Sigmoid colon (tissue), 7 donors: ENCODE measurements at regions of chr4 and their contacts with region 1.

Region 1: DNA sequence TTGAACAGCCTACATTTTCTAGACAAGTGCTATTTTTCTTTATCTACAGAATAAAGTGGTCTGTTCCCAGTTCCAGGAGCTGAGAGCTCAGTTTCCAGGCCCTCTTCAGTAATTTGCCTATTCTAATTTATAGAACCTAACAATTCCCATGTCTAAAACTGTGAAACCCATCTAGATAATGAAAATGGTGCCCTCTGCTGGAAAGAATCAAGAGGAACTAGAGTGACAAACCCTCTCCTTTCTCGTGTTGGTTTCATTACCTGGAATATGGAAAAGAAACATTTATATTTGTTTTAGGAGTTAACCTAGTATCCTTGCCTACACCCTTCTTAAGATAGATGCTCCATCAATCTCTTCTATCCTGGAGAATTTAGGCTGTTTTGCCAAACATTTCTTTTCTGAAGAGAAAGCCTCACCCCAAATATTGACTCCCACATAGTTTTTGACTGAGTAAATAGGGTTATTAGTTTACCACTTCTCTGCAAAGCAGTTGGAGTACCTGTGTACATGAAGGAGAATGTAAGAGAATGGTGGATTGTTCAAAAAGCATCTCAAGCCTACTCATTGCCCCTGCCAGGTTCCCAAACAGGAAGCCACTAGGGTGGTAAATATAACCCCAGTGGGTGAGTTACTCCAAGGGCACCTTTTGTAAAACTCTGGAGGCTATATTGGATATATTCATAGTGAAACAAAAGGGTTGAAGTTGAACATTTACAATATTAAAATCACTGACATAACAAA is 121.6 kb downstream of the RASL11B start:
- DNase-seq: no peak
- H3K4me3 ChIP-seq: no peak overlapping the region
- H3K27ac ChIP-seq: no peak overlapping the region
- H3K4me1 ChIP-seq: peaks cover 0 to 24% (median 6%) of the 10 kb centered on the region in 4 donors
- H3K27me3 ChIP-seq: no peaks in the 10 kb centered on the region
- CTCF ChIP-seq: peak; percentile 10 to 69 (median 50)
- EP300 ChIP-seq: no peak
- POLR2A ChIP-seq: no peak

Region 2: GRCh38 chr4:52376132-52376704 is 607.5 kb before region 1 on chr4:
- intact Hi-C with region 1: loop called (anchors 5 kb)
- DNase-seq: no peak
- H3K4me3 ChIP-seq: no peak overlapping the region
- H3K27ac ChIP-seq: no peak overlapping the region
- H3K4me1 ChIP-seq: no peaks in the 10 kb centered on the region
- H3K27me3 ChIP-seq: no peaks in the 10 kb centered on the region
- CTCF ChIP-seq: peak in 3 of 4 experiments; percentile 22 to 60 (median 50)
- EP300 ChIP-seq: no peak
- POLR2A ChIP-seq: no peak

Region 3: DNA sequence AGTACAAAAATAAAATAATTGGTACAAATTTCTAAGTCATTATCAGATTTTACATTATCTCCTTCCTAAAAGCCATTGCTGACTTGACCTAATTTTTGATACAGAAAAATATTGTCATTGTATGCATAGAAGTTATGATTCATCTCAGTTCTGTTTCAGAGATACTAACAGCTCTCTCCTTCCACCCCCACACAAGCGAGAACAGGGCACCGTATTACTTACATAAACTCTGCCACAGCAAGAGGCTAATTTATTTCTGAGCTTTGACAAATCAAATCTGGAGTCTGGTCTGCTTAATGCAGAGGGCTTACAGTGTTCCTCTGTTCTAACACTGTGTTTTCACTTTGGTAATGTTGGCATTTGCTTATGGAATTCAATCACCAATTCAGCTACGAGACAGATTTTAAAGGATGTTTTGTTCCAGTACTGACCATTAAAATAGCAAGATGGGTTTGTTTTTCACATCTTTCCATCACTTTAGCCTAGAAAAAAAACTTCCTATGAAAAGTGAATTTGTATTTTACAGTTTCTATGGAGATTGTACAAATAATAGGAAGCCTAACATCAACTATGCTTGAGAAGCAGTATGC is 506.4 kb before region 1 on chr4:
- intact Hi-C with region 1: no loop called
- DNase-seq: no peak
- H3K4me3 ChIP-seq: no peak overlapping the region
- H3K27ac ChIP-seq: no peak overlapping the region
- H3K4me1 ChIP-seq: peaks cover 0 to 11% (median 0%) of the 10 kb centered on the region in 4 donors
- H3K27me3 ChIP-seq: no peaks in the 10 kb centered on the region
- CTCF ChIP-seq: no peak
- EP300 ChIP-seq: no peak
- POLR2A ChIP-seq: no peak

Region 4: GRCh38 chr4:52659001-52659721 is 324.6 kb before region 1 on chr4 and contains the start of gene USP46:
- intact Hi-C with region 1: loop called (anchors 5 kb)
- DNase-seq: peak; percentile 86
- H3K4me3 ChIP-seq: peak within 1 kb of the TSS; percentile 69 to 95 (median 84)
- H3K27ac ChIP-seq: peak within 1 kb of the TSS; percentile 95 to 98 (median 96)
- H3K4me1 ChIP-seq: peaks cover 0 to 28% (median 18%) of the 10 kb centered on the region in 4 donors
- H3K27me3 ChIP-seq: no peaks in the 10 kb centered on the region
- CTCF ChIP-seq: no peak
- EP300 ChIP-seq: no peak
- POLR2A ChIP-seq: no peak
- total RNA-seq, gene USP46: 5.0 to 9.1 (median 6.0) TPM

Region 5: GRCh38 chr4:52861879-52862616 is 121.7 kb before region 1 on chr4 and contains the start of gene RASL11B:
- intact Hi-C with region 1: loop called (anchors 5 kb)
- DNase-seq: peak; percentile 87
- H3K4me3 ChIP-seq: peak within 1 kb of the TSS; percentile 44 to 75 (median 65)
- H3K27ac ChIP-seq: peak within 1 kb of the TSS; percentile 45 to 69 (median 58)
- H3K4me1 ChIP-seq: peaks cover 0 to 27% (median 22%) of the 10 kb centered on the region in 4 donors
- H3K27me3 ChIP-seq: peaks cover 0 to 11% (median 6%) of the 10 kb centered on the region in 3 donors
- CTCF ChIP-seq: peak in 2 of 4 experiments; percentile 20 to 25
- EP300 ChIP-seq: no peak
- POLR2A ChIP-seq: no peak
- total RNA-seq, gene RASL11B: 0.36 to 2.2 (median 0.60) TPM

Region 6: DNA sequence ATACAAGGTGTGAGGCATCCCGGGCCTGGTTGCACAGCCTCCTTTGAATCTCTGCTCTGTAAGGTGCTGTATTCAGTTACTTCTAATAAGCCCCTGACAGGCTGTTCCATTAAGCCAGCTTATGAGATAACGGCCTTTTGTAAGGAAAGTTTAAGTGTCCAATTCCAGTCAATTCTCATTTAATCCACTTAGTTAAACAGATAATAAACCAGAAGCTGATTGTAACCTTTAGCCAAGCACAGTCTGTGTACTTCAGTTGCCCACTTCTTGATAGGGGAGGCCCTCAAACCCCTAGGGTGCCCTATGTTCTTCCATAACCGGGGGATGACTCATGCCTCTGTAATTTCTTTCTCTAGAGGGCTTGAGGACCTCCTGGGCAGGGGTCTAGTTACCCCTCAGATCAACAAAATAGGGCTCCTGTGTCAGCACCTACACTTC is 58.2 kb before region 1 on chr4:
- intact Hi-C with region 1: no loop called
- DNase-seq: no peak
- H3K4me3 ChIP-seq: no peak overlapping the region
- H3K27ac ChIP-seq: no peak overlapping the region
- H3K4me1 ChIP-seq: peaks cover 0 to 9% (median 0%) of the 10 kb centered on the region in 4 donors
- H3K27me3 ChIP-seq: no peaks in the 10 kb centered on the region
- CTCF ChIP-seq: no peak
- EP300 ChIP-seq: no peak
- POLR2A ChIP-seq: no peak